Activated CD4-positive, alpha-beta T cell treated with anti-CD3 and anti-CD28 coated beads, Interleukin-2, amount 10 ng/mL, durations not matched to agents 24 days and 14 days (primary cell): ENCODE measurements at regions of chr15 and their contacts with region 1.

Region 1: DNA sequence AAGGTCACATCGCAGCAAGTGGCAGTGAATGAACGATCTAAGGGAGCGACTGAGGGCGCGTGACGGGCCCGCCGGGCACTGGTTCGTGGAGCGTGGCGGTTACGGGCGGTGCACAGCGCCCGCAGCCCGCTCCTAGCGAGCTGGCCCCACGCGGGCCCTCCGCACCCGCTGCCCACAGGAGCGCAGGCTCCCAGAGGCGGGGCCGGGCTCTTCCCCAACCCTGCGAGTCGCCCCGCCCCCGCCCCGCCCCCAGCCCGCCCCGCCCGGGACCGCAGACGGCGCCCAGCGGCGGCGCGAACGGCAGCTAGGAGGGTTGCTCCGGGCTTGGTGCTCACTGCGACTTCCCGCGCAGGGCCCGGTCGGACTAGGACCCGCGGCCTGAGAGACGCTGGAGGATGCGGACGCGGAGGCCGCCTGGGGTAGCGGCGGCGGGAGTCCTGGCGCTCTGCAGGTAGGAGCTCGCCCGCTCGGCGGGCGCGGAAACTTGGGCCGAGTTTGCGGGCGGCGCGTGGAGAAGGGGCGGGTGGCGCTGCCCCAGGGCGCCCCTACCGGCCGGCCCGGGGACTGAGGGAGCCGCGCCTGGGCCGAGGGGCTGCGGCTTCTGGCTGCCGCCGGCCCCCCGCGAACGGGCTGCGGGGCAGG is at the start of gene C15orf39:
- DNase-seq: peak; percentile 94
- H3K4me3 Mint-ChIP-seq: peak within 1 kb of the TSS; percentile 94
- H3K27ac Mint-ChIP-seq: peak within 1 kb of the TSS; percentile 90
- H3K4me1 Mint-ChIP-seq: peaks cover 59% of the 10 kb centered on the region
- H3K27me3 Mint-ChIP-seq: no peaks in the 10 kb centered on the region
- total RNA-seq, gene C15orf39: 43.2 and 43.9 TPM in 2 replicates

Region 2: DNA sequence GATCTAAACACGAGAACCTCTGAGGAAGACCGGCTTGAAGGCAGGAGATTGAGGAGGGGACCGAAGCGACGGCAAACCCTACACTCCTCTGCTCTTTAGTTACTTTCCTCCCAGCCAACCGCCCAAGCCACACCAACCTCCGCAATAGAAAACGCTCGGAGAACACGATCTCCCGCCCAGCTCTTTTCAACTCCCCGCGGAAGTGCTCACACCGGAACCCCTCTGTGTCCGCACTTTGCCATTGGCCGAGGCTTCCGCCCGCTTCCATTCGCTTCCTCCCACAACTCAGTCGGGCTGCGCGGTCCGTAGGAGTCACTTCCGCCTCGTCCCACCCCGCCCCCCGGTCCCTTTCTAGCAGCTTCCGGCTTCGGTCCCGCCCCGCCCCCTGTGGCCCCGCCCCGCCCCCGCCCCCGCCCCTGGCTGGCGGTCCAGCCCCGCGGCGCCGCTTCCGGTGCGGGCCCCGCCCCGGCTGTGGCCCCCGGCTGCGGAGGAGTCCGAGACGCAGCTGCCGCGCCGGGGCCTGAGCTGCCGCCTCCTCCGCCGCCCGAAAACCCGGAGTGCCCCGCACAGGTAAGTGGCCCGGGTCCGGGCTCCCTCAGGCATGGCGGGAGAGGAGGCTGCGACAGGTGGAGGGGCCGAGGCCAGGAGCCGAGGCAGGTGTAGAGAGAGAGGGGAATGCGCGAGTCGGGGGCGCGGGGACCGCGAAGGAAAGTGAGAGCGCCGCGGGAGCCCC is 660.8 kb before region 1 on chr15 and contains the start of gene ARID3B:
- intact Hi-C with region 1: loop called (anchors 5 kb)
- DNase-seq: peak; percentile 97
- H3K4me3 Mint-ChIP-seq: peak within 1 kb of the TSS; percentile 98
- H3K27ac Mint-ChIP-seq: peak within 1 kb of the TSS; percentile 95
- H3K4me1 Mint-ChIP-seq: peaks cover 44% of the 10 kb centered on the region
- H3K27me3 Mint-ChIP-seq: no peaks in the 10 kb centered on the region
- total RNA-seq, gene ARID3B: 31.1 and 33.9 TPM in 2 replicates

Region 3: GRCh38 chr15:74956648-74957300 is 245.0 kb before region 1 on chr15 and contains the start of gene RPP25:
- intact Hi-C with region 1: loop called (anchors 5 kb)
- DNase-seq: peak; percentile 93
- H3K4me3 Mint-ChIP-seq: peak within 1 kb of the TSS; percentile 74
- H3K27ac Mint-ChIP-seq: no peak within 1 kb of the TSS
- H3K4me1 Mint-ChIP-seq: peaks cover 32% of the 10 kb centered on the region
- H3K27me3 Mint-ChIP-seq: peaks cover 36% of the 10 kb centered on the region
- total RNA-seq, gene RPP25: 13.1 and 13.9 TPM in 2 replicates

Region 4: DNA sequence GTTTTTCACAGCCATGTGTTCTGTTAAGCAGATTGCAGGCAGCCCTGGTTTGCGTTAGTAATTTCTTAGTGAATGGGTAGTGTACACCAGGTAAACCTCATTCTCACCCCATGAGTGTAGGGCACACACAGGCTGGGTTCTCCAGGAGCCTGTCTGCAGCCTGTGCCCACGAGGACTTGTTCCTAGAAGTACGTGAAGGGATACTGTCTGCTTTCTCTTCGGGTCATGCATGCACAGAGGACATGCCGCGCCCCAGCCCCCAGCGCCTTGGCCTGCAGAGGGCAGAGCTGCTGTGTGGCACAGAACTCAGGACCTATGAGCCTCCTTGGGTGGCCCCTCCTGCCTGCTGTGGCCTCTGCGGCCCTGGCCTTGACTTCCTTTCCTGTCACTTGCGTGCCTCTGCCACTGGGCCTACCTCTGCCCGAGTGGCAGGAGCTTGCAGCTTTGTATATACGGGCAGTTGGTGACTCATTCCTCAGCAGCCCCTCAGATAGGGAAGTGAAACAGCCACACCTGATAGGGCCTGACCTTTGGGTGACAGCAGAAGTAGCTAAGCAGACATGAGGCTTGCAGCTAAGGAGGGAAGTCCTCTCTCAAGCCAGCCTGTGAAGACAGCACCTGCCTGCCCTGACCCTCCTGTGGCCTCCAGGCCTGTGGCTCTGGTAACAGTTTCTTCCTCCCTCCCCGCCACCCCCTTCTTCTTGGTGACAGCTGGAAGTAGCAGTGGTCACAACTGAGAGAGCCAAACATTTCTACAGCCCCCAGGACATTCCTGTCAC is 158.8 kb before region 1 on chr15:
- intact Hi-C with region 1: loop called (anchors 1 kb)
- DNase-seq: peak; percentile 92
- H3K4me3 Mint-ChIP-seq: peak overlapping the region; percentile 52
- H3K27ac Mint-ChIP-seq: peak overlapping the region; percentile 81
- H3K4me1 Mint-ChIP-seq: peaks cover 64% of the 10 kb centered on the region
- H3K27me3 Mint-ChIP-seq: no peaks in the 10 kb centered on the region

Region 5: GRCh38 chr15:75130597-75131268 is 71.0 kb before region 1 on chr15:
- intact Hi-C with region 1: loop called (anchors 2 kb)
- DNase-seq: peak; percentile 82
- H3K4me3 Mint-ChIP-seq: peak overlapping the region; percentile 69
- H3K27ac Mint-ChIP-seq: peak overlapping the region; percentile 75
- H3K4me1 Mint-ChIP-seq: peaks cover 27% of the 10 kb centered on the region
- H3K27me3 Mint-ChIP-seq: peaks cover 3% of the 10 kb centered on the region

Region 6: DNA sequence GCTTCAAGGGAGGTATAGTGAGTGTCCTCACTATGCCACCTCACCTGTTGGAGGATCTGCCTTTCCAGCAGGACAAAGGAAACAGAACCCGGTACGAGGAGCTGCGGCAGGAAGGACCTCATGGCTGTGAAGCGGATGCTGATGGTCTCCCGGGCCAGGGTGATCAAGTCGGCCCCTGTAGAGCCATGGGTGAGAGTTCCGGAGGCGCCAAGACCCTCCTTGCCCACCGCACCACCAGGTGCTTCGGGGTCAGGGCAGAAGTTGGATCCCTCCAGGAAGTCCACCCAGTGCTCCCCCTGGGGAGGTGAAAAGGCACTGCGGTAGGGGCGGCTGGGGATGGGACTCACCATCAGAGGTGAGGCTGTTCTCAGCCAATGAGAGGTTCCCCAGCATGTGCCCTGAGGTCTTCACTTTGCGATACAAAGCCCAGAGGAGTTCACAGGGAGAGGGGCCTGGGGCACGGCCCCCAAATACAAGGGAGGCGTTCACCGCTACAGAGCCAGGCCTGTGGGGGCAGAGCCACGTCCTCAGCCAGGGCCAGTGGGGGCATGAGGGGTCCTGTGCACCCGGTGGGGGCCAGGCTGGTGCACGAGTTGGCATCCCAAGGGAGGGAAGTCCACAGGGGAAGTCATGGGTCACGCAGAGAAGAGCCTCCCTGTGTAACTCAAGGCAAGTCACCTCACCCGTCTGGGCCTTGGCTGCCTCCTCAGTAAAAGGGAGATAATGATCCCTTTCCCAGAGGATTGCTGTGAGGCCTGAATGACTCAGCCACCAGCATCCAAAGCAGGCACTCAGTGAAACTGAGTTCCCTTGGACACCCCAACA is 27.7 kb after region 1 on chr15:
- intact Hi-C with region 1: no loop called
- DNase-seq: no peak
- H3K4me3 Mint-ChIP-seq: no peak overlapping the region
- H3K27ac Mint-ChIP-seq: no peak overlapping the region
- H3K4me1 Mint-ChIP-seq: no peaks in the 10 kb centered on the region
- H3K27me3 Mint-ChIP-seq: peaks cover 9% of the 10 kb centered on the region